Activated CD8-positive, alpha-beta T cell treated with anti-CD3 and anti-CD28 coated beads for 36 hours (primary cell): ENCODE measurements at regions of chr12 and their contacts with region 1.

Region 1: GRCh38 chr12:38316391-38317129 is at the start of gene ALG10B:
- DNase-seq: peak; percentile 93
- ATAC-seq: peak; percentile 99
- H3K4me3 Mint-ChIP-seq: peak within 1 kb of the TSS; percentile 95
- H3K27ac Mint-ChIP-seq: peak within 1 kb of the TSS; percentile 96
- H3K4me1 Mint-ChIP-seq: peaks cover 16% of the 10 kb centered on the region
- H3K27me3 Mint-ChIP-seq: no peaks in the 10 kb centered on the region
- CTCF ChIP-seq: peak; percentile 60
- total RNA-seq, gene ALG10B: 13.8 to 16.8 TPM

Region 2: DNA sequence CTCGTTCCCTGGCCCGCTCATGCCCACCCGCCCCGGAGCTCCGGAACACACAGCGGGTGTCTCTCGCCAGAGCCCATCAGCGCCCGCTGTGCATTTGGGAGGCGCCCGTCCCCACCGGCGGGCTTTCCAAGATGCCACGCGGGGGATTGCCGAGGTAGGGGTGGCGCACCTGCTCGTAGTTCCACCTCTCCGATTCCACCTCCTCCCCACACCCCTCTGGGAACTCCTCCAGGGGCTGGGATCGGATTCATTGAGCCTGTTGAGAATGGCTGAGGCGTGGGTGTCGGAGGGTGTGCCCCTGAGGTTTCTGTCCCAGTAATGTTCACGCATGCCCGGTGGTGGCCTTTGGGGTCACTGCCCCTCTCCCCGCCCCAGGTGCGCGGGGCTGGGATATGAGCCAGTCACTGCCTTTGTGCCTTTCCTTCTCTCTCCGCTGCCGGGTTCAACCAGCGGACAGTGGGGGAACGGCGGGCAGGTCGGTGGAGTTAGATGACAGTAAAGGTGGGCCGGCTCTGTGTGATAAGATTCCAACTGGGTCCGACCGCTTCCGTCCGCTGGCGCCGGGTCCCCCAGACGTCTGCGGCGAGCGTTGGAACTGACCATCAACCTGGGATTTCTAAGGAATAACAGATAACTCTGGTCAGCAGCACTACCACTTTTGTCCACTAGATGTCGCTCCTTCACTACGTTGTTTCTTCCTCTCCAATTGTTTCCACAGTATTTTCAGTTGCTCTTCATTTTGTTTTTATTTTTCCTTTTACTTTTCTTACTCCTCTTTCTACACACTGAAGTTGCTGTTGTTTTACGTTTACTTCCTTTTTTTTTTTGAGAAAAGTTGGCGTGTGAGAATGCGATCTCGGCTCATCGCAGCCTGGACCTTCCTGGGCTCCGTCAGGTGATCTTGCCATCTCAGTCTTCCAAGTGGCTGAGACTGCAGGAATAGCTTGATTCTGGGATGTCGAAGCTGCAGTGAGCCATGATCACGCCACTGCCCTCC is 178.0 kb before region 1 on chr12:
- CTCF ChIA-PET with region 1: interaction called, 10 read pairs
- POLR2A ChIA-PET with region 1: no interaction called
- intact Hi-C with region 1: loop called (anchors 10 kb)
- DNase-seq: peak; percentile 71
- ATAC-seq: peak; percentile 58
- H3K4me3 Mint-ChIP-seq: peak overlapping the region; percentile 67
- H3K27ac Mint-ChIP-seq: no peak overlapping the region
- H3K4me1 Mint-ChIP-seq: no peaks in the 10 kb centered on the region
- H3K27me3 Mint-ChIP-seq: peaks cover 9% of the 10 kb centered on the region
- CTCF ChIP-seq: peak; percentile 99

Region 3: GRCh38 chr12:38384816-38385378 is 68.3 kb after region 1 on chr12:
- CTCF ChIA-PET with region 1: no interaction called
- POLR2A ChIA-PET with region 1: no interaction called
- intact Hi-C with region 1: no loop called
- DNase-seq: no peak
- ATAC-seq: no peak
- H3K4me3 Mint-ChIP-seq: no peak overlapping the region
- H3K27ac Mint-ChIP-seq: no peak overlapping the region
- H3K4me1 Mint-ChIP-seq: no peaks in the 10 kb centered on the region
- H3K27me3 Mint-ChIP-seq: no peaks in the 10 kb centered on the region
- CTCF ChIP-seq: no peak

Region 4: DNA sequence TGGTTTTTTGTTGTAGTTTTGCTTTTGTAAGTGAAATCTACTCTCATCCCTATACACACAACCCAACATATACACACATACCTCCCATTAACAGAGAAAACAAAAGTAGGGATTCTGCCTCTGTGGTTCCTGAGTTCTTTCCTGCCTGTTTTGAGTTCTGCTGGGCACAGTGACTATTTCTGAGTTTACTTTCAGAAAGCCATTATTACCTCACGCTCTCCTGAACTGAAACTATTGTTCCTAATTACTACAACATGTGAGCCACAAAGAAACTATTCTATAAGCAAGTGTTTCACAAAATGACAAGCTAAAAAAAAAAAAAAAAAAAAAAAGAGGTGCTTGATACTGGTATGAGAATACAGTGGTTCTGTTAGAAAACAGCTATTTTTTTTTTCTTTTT is 110.9 kb after region 1 on chr12:
- CTCF ChIA-PET with region 1: no interaction called
- POLR2A ChIA-PET with region 1: no interaction called
- intact Hi-C with region 1: no loop called
- DNase-seq: no peak
- ATAC-seq: no peak
- H3K4me3 Mint-ChIP-seq: no peak overlapping the region
- H3K27ac Mint-ChIP-seq: no peak overlapping the region
- H3K4me1 Mint-ChIP-seq: no peaks in the 10 kb centered on the region
- H3K27me3 Mint-ChIP-seq: no peaks in the 10 kb centered on the region
- CTCF ChIP-seq: no peak